Activated CD4-positive, alpha-beta memory T cell treated with anti-CD3 and anti-CD28 coated beads for 36 hours (primary cell): ENCODE measurements at regions of chr2 and their contacts with region 1.

Region 1: GRCh38 chr2:207625018-207625907 is at the start of gene METTL21A:
- DNase-seq: peak; percentile 96
- H3K4me3 Mint-ChIP-seq: peak within 1 kb of the TSS; percentile 87
- H3K27ac Mint-ChIP-seq: peak within 1 kb of the TSS; percentile 96
- H3K4me1 Mint-ChIP-seq: peaks cover 48% of the 10 kb centered on the region
- H3K27me3 Mint-ChIP-seq: no peaks in the 10 kb centered on the region
- total RNA-seq, gene METTL21A: 21.2 to 22.9 TPM

Region 2: GRCh38 chr2:207437524-207438143 is 187.6 kb before region 1 on chr2:
- CTCF ChIA-PET with region 1: no interaction called
- POLR2A ChIA-PET with region 1: no interaction called
- intact Hi-C with region 1: no loop called
- DNase-seq: no peak
- H3K4me3 Mint-ChIP-seq: no peak overlapping the region
- H3K27ac Mint-ChIP-seq: no peak overlapping the region
- H3K4me1 Mint-ChIP-seq: no peaks in the 10 kb centered on the region
- H3K27me3 Mint-ChIP-seq: no peaks in the 10 kb centered on the region

Region 3: GRCh38 chr2:207529330-207530159 is 95.7 kb before region 1 on chr2 and contains the start of gene CREB1:
- CTCF ChIA-PET with region 1: interaction called, 15 read pairs
- POLR2A ChIA-PET with region 1: interaction called, 38 read pairs
- intact Hi-C with region 1: loop called (anchors 1 kb)
- DNase-seq: peak; percentile 100
- H3K4me3 Mint-ChIP-seq: peak within 1 kb of the TSS; percentile 89
- H3K27ac Mint-ChIP-seq: peak within 1 kb of the TSS; percentile 99
- H3K4me1 Mint-ChIP-seq: peaks cover 50% of the 10 kb centered on the region
- H3K27me3 Mint-ChIP-seq: no peaks in the 10 kb centered on the region
- total RNA-seq, gene CREB1: 90.7 to 92.2 TPM

Region 4: GRCh38 chr2:207640661-207641060 is 15.4 kb after region 1 on chr2:
- CTCF ChIA-PET with region 1: interaction called, 8 read pairs
- POLR2A ChIA-PET with region 1: no interaction called
- intact Hi-C with region 1: loop called (anchors 1 kb)
- DNase-seq: no peak
- H3K4me3 Mint-ChIP-seq: no peak overlapping the region
- H3K27ac Mint-ChIP-seq: no peak overlapping the region
- H3K4me1 Mint-ChIP-seq: no peaks in the 10 kb centered on the region
- H3K27me3 Mint-ChIP-seq: peaks cover 11% of the 10 kb centered on the region

Region 5: GRCh38 chr2:207710814-207711740 is 85.8 kb after region 1 on chr2 and contains the start of gene CCNYL1:
- CTCF ChIA-PET with region 1: interaction called, 18 read pairs
- POLR2A ChIA-PET with region 1: interaction called, 12 read pairs
- intact Hi-C with region 1: loop called (anchors 1 kb)
- DNase-seq: peak; percentile 99
- H3K4me3 Mint-ChIP-seq: peak within 1 kb of the TSS; percentile 88
- H3K27ac Mint-ChIP-seq: peak within 1 kb of the TSS; percentile 82
- H3K4me1 Mint-ChIP-seq: peaks cover 25% of the 10 kb centered on the region
- H3K27me3 Mint-ChIP-seq: no peaks in the 10 kb centered on the region
- total RNA-seq, gene CCNYL1: 5.7 to 6.4 TPM

Region 6: GRCh38 chr2:207769597-207770486 is 144.6 kb after region 1 on chr2 and contains the start of gene FZD5:
- CTCF ChIA-PET with region 1: interaction called, 14 read pairs
- POLR2A ChIA-PET with region 1: interaction called, 3 read pairs
- intact Hi-C with region 1: loop called (anchors 1 kb)
- DNase-seq: peak; percentile 92
- H3K4me3 Mint-ChIP-seq: peak within 1 kb of the TSS; percentile 78
- H3K27ac Mint-ChIP-seq: no peak within 1 kb of the TSS
- H3K4me1 Mint-ChIP-seq: peaks cover 31% of the 10 kb centered on the region
- H3K27me3 Mint-ChIP-seq: peaks cover 30% of the 10 kb centered on the region
- total RNA-seq, gene FZD5: 1.3 to 1.7 TPM

Region 7: GRCh38 chr2:208025037-208025813 is 400.0 kb after region 1 on chr2 and contains the start of gene PLEKHM3:
- CTCF ChIA-PET with region 1: no interaction called
- POLR2A ChIA-PET with region 1: interaction called, 7 read pairs
- intact Hi-C with region 1: loop called (anchors 1 kb)
- DNase-seq: peak; percentile 86
- H3K4me3 Mint-ChIP-seq: peak within 1 kb of the TSS; percentile 90
- H3K27ac Mint-ChIP-seq: peak within 1 kb of the TSS; percentile 90
- H3K4me1 Mint-ChIP-seq: peaks cover 14% of the 10 kb centered on the region
- H3K27me3 Mint-ChIP-seq: no peaks in the 10 kb centered on the region
- total RNA-seq, gene PLEKHM3: 4.5 to 5.5 TPM

Region 8: GRCh38 chr2:208265801-208266552 is 640.7 kb after region 1 on chr2 and contains the start of gene PIKFYVE:
- CTCF ChIA-PET with region 1: no interaction called
- POLR2A ChIA-PET with region 1: no interaction called
- intact Hi-C with region 1: loop called (anchors 1 kb)
- DNase-seq: peak; percentile 95
- H3K4me3 Mint-ChIP-seq: peak within 1 kb of the TSS; percentile 89
- H3K27ac Mint-ChIP-seq: peak within 1 kb of the TSS; percentile 98
- H3K4me1 Mint-ChIP-seq: peaks cover 32% of the 10 kb centered on the region
- H3K27me3 Mint-ChIP-seq: no peaks in the 10 kb centered on the region
- total RNA-seq, gene PIKFYVE: 22.4 to 23.7 TPM